Activated CD4-positive, alpha-beta memory T cell treated with anti-CD3 and anti-CD28 coated beads for 36 hours (primary cell): ENCODE measurements at regions of chr17 and their contacts with region 1.

Region 1: DNA sequence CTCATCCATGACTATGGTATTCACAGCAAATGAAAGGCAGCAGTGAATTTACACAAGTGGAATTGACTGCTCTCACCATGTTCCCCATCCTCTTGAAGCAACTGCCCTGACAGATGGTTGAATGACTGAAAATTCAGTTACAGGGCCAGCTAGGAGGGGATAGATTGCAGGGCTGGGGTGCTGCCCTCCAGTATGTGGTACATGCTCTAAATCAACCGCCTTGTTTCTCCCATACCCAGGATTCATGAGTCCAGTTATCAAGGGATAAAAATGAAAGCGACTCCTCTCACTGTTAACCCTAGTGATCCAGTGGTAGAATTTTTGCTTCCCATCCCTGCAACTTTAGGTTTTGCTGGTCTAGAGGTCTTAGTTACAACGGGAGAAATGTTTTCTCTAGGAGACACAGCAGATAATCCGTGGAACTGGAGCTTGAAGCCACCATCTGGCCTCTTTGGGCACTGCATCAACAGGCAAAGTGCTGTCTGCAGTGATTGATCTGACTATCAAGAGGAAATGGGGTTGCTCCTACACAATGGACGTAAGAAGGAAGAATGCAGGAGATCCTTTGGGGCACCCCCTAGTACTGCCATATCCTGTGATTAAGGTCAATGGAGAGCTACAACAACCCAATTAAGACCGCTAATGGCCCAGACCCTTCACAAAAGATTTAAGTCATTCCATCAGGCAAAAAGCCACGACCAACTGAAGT is 32.0 kb downstream of the SCPEP1 start:
- DNase-seq: peak; percentile 72
- H3K4me3 Mint-ChIP-seq: no peak overlapping the region
- H3K27ac Mint-ChIP-seq: no peak overlapping the region
- H3K4me1 Mint-ChIP-seq: peaks cover 7% of the 10 kb centered on the region
- H3K27me3 Mint-ChIP-seq: peaks cover 4% of the 10 kb centered on the region

Region 2: GRCh38 chr17:56994009-56994792 is 15.7 kb before region 1 on chr17:
- CTCF ChIA-PET with region 1: interaction called, 11 read pairs
- POLR2A ChIA-PET with region 1: no interaction called
- intact Hi-C with region 1: no loop called
- DNase-seq: no peak
- H3K4me3 Mint-ChIP-seq: no peak overlapping the region
- H3K27ac Mint-ChIP-seq: no peak overlapping the region
- H3K4me1 Mint-ChIP-seq: no peaks in the 10 kb centered on the region
- H3K27me3 Mint-ChIP-seq: no peaks in the 10 kb centered on the region